ENCODE measurements at regions of chr11 and their contacts with region 1.

Region 1: GRCh38 chr11:14554959-14555358 is 34.8 kb upstream of the PSMA1 start:
- DNase-seq: peak in 4 of 9 experiments; percentile 46 to 90 (median 70)
- ATAC-seq: peak; percentile 87
- H3K4me3 ChIP-seq: no peak overlapping the region
- H3K4me3 Mint-ChIP-seq: no peak overlapping the region
- H3K27ac ChIP-seq: peak overlapping the region; percentile 53 to 67
- H3K27ac Mint-ChIP-seq: peak overlapping the region; percentile 97
- H3K4me1 ChIP-seq: peaks cover 33% of the 10 kb centered on the region
- H3K4me1 Mint-ChIP-seq: peaks cover 51% of the 10 kb centered on the region
- H3K27me3 ChIP-seq: no peaks in the 10 kb centered on the region
- H3K27me3 Mint-ChIP-seq: no peaks in the 10 kb centered on the region
- CTCF ChIP-seq: no peak

Region 2: DNA sequence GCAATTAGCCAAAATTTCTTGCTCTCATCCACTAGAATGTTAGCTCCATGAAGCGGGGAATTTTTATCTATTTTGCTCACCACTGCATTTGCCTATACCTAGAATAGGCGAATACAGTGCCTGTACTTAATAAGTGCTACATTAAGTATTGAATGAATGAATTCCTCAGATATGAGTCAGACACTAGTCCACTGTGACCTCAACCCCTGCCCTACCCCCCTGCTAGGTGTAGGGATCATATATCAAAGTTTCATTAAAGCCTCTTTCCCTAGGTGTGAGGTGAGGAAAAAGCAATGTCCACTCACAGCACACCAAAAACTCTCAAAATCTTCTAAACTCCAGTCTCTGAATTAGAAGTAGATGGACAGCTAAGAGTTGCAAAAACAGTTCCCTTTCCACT is 25.0 kb before region 1 on chr11:
- CTCF ChIA-PET with region 1: no interaction called
- POLR2A ChIA-PET with region 1: no interaction called
- intact Hi-C with region 1: no loop called
- DNase-seq: no peak
- ATAC-seq: no peak
- H3K4me3 ChIP-seq: no peak overlapping the region
- H3K4me3 Mint-ChIP-seq: no peak overlapping the region
- H3K27ac ChIP-seq: no peak overlapping the region
- H3K27ac Mint-ChIP-seq: no peak overlapping the region
- H3K4me1 ChIP-seq: no peaks in the 10 kb centered on the region
- H3K4me1 Mint-ChIP-seq: no peaks in the 10 kb centered on the region
- H3K27me3 ChIP-seq: no peaks in the 10 kb centered on the region
- H3K27me3 Mint-ChIP-seq: no peaks in the 10 kb centered on the region
- CTCF ChIP-seq: no peak

Region 3: DNA sequence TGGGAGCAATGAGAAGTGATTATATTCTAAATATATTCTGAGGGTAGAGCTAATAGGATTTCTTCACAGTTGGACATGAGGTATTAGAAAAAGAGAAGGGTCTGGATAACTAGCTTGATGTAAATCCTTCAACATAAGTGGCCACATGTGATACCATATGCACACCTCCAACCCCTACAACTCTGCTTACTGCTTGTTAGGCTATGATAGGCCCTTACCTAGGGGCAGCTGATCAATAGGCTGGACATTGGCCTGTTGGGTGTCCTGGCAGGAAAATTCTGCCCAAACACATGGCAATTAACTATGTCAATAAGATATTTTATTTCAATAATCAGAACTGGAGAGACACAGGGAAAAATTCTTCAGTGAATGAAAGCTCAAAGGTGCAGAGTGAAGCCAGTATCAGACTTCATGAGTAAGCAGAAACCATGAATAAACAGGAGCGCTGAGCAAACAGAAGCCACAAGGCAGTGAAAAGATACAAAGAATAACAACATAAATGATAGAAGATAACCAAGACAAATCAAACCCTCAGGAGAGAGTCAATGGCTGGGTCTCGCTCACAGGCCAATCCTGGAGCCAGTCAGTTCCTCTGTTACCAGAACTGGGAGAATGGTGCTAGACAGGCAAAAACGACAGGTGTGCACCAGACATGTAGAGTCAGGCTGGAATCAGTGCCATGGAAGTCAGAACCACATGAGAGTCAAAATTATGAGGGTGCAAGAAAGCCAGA is 11.5 kb after region 1 on chr11:
- CTCF ChIA-PET with region 1: no interaction called
- POLR2A ChIA-PET with region 1: interaction called, 14 read pairs
- intact Hi-C with region 1: loop called in 1 of 2 experiments (anchors 2 kb)
- DNase-seq: no peak
- ATAC-seq: no peak
- H3K4me3 ChIP-seq: no peak overlapping the region
- H3K4me3 Mint-ChIP-seq: no peak overlapping the region
- H3K27ac ChIP-seq: no peak overlapping the region
- H3K27ac Mint-ChIP-seq: peak overlapping the region; percentile 66
- H3K4me1 ChIP-seq: peaks cover 40% of the 10 kb centered on the region
- H3K4me1 Mint-ChIP-seq: peaks cover 69% of the 10 kb centered on the region
- H3K27me3 ChIP-seq: no peaks in the 10 kb centered on the region
- H3K27me3 Mint-ChIP-seq: no peaks in the 10 kb centered on the region
- CTCF ChIP-seq: no peak